Activated naive CD4-positive, alpha-beta T cell treated with anti-CD3 and anti-CD28 coated beads for 36 hours (primary cell): ENCODE measurements at regions of chr5 and their contacts with region 1.

Region 1: GRCh38 chr5:139403787-139404483 is at the start of gene SPATA24:
- DNase-seq: peak; percentile 99
- H3K4me3 Mint-ChIP-seq: peak within 1 kb of the TSS; percentile 93
- H3K27ac Mint-ChIP-seq: peak within 1 kb of the TSS; percentile 100
- H3K4me1 Mint-ChIP-seq: peaks cover 37% of the 10 kb centered on the region
- H3K27me3 Mint-ChIP-seq: no peaks in the 10 kb centered on the region
- total RNA-seq, gene SPATA24: 6.0 to 7.4 TPM

Region 2: DNA sequence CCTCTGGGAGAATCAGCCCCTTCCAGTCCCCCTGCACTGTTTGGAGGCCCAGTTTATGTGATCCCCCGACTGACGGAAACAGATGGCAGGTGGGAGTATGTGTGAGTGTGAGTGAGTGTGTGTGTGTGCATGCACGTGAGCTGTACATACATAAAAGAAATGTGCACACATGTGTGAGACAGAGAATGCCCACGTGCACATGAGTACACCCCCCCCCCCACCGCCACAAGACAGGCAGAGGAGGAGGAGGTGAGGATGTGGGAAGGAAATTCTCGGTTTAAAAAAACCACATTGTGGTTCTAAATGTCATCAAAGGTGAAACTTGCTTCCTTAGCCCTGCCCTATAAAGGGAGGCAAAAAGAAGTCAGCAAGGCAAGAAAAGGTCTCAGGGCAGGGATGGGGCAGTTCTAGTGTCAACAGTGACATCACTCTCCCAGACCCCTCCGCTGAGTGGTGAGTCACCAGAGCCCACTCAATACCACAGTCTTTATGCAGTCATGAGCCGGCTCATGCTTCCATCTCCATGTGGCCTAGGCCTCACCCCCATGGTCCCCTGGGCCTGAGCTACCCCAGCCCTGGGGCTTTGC is 749.6 kb before region 1 on chr5:
- CTCF ChIA-PET with region 1: no interaction called
- intact Hi-C with region 1: loop called (anchors 5 kb)
- DNase-seq: peak; percentile 85
- H3K4me3 Mint-ChIP-seq: no peak overlapping the region
- H3K27ac Mint-ChIP-seq: peak overlapping the region; percentile 31
- H3K4me1 Mint-ChIP-seq: peaks cover 19% of the 10 kb centered on the region
- H3K27me3 Mint-ChIP-seq: peaks cover 78% of the 10 kb centered on the region

Region 3: GRCh38 chr5:139341650-139342422 is 62.1 kb before region 1 on chr5 and contains the start of gene PAIP2:
- CTCF ChIA-PET with region 1: no interaction called
- intact Hi-C with region 1: loop called (anchors 1 kb)
- DNase-seq: peak; percentile 99
- H3K4me3 Mint-ChIP-seq: peak within 1 kb of the TSS; percentile 100
- H3K27ac Mint-ChIP-seq: peak within 1 kb of the TSS; percentile 99
- H3K4me1 Mint-ChIP-seq: peaks cover 48% of the 10 kb centered on the region
- H3K27me3 Mint-ChIP-seq: no peaks in the 10 kb centered on the region
- total RNA-seq, gene PAIP2: 68.8 to 74.3 TPM

Region 4: GRCh38 chr5:139417214-139417613 is 13.3 kb after region 1 on chr5:
- CTCF ChIA-PET with region 1: interaction called, 8 read pairs
- intact Hi-C with region 1: loop called (anchors 1 kb)
- DNase-seq: no peak
- H3K4me3 Mint-ChIP-seq: no peak overlapping the region
- H3K27ac Mint-ChIP-seq: no peak overlapping the region
- H3K4me1 Mint-ChIP-seq: peaks cover 50% of the 10 kb centered on the region
- H3K27me3 Mint-ChIP-seq: no peaks in the 10 kb centered on the region

Region 5: GRCh38 chr5:139446956-139447779 is 43.2 kb after region 1 on chr5:
- CTCF ChIA-PET with region 1: interaction called, 3 read pairs
- intact Hi-C with region 1: loop called (anchors 1 kb)
- DNase-seq: peak; percentile 68
- H3K4me3 Mint-ChIP-seq: no peak overlapping the region
- H3K27ac Mint-ChIP-seq: peak overlapping the region; percentile 97
- H3K4me1 Mint-ChIP-seq: peaks cover 63% of the 10 kb centered on the region
- H3K27me3 Mint-ChIP-seq: no peaks in the 10 kb centered on the region